HEK293T (cell line): ENCODE measurements at regions of chr10 and their contacts with region 1.

Region 1: DNA sequence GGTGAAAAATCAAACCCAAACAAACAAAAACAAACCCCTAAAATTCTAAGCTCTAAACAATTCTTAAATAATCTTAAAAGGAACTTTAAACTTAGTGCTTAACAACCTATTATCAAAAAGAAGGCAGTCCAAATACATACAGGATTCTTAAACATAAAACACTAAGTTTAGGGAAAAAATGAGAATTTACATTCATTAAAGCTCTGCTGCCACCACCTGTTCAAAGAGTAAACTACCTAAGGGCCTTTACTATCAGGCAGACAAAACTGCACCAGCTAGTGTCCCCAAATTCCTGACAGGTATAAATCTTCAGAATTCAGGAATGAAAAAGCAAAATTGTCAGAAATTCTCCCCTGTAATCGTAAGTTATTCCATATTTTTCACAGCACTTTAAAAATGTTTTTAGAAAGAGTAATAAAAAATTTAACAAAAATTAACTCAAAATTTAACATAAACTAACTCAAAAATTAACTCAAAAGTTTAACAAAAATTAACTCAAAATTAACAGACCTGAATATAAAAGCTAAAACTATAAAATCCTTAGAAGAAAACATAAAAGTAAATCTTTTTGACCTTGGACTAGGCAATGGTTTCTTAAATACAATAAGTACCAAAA is 55.1 kb downstream of the PDZD8 start:
- DNase-seq: peak; percentile 39

Region 2: DNA sequence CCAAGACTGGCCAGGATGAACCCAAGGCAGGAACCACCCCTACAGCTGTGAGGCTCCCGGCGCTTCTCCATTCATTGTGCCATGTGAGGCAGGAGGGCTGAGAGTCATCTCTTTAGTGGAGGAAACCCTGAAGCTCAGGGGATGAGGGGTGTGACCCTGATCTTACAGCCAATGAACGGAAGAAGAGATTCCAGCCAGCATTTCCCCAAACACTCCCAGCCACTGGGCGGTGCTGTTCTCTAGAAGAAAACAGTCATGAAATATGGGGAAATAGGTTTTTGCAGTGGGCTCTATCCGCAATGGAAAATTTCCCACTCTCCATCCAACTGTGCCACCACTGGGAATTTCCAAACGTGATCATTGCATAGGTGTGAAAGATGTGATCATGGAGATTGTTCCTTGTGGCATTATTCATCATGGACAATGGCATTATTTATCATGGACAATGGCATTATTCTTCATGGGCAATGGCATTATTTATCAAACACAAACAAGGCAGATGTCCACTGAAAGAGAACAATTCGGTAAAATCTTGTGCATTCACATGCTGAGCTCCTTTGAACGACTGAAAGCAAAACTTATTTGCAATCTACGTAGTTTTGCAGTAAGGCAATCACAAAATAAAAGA is 93.2 kb before region 1 on chr10:
- CTCF ChIA-PET with region 1: interaction called, 18 read pairs
- POLR2A ChIA-PET with region 1: no interaction called
- DNase-seq: peak; percentile 75